Mammary epithelial cell (primary cell): ENCODE measurements at regions of chr12 and their contacts with region 1.

Region 1: GRCh38 chr12:28998637-28999120 is 150.4 kb upstream of the FAR2 start:
- DNase-seq: peak; percentile 56
- H3K4me3 ChIP-seq: no peak overlapping the region
- H3K27ac ChIP-seq: no peak overlapping the region
- H3K4me1 ChIP-seq: peaks cover 10% of the 10 kb centered on the region
- H3K27me3 ChIP-seq: no peaks in the 10 kb centered on the region
- CTCF ChIP-seq: peak; percentile 51 to 61

Region 2: DNA sequence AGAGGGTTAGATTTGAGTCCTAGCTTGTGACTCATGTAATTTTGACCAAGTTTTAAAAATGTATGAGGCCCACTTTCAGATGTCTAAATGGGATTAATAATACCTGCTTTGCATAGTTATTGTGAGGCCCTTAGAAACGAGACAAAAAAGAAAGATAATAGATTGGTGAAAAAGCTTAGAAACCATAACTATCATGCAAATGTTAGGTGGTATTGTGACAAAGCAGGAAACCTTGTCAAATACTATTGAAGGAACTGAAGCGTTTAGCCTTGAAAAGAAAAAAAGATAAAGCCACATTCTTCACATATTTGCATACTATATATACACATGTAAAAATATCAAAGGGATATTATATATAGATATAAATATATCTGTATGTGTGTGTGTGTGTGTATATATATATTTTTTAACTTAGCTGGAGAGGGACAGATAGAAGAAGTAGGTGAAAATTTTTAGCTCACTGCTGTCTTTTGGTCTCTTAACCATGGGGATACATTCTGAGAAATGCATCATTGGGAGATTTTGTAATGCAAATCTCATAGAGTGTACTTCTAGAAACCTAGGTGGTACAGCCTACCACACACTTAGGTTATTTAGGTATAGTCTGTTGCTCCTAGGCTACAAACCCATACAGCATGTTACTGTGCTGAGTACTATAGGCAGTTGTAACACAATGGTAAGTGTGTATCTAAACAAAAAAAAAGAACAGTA is 538.1 kb before region 1 on chr12:
- CTCF ChIA-PET with region 1: no interaction called
- dilution Hi-C with region 1: no loop called
- in situ Hi-C with region 1: no loop called
- intact Hi-C with region 1: loop called (anchors 10 kb)
- DNase-seq: no peak
- H3K4me3 ChIP-seq: no peak overlapping the region
- H3K27ac ChIP-seq: no peak overlapping the region
- H3K4me1 ChIP-seq: no peaks in the 10 kb centered on the region
- H3K27me3 ChIP-seq: no peaks in the 10 kb centered on the region
- CTCF ChIP-seq: no peak

Region 3: GRCh38 chr12:28583701-28584261 is 414.9 kb before region 1 on chr12:
- CTCF ChIA-PET with region 1: no interaction called
- dilution Hi-C with region 1: no loop called
- in situ Hi-C with region 1: no loop called
- intact Hi-C with region 1: loop called (anchors 10 kb)
- DNase-seq: peak; percentile 77
- H3K4me3 ChIP-seq: no peak overlapping the region
- H3K27ac ChIP-seq: no peak overlapping the region
- H3K4me1 ChIP-seq: no peaks in the 10 kb centered on the region
- H3K27me3 ChIP-seq: no peaks in the 10 kb centered on the region
- CTCF ChIP-seq: peak; percentile 40 to 54

Region 4: GRCh38 chr12:28814246-28814645 is 184.4 kb before region 1 on chr12:
- CTCF ChIA-PET with region 1: no interaction called
- dilution Hi-C with region 1: no loop called
- in situ Hi-C with region 1: no loop called
- intact Hi-C with region 1: no loop called
- DNase-seq: peak; percentile 94
- H3K4me3 ChIP-seq: no peak overlapping the region
- H3K27ac ChIP-seq: no peak overlapping the region
- H3K4me1 ChIP-seq: peaks cover 15% of the 10 kb centered on the region
- H3K27me3 ChIP-seq: no peaks in the 10 kb centered on the region
- CTCF ChIP-seq: no peak

Region 5: GRCh38 chr12:28941248-28941647 is 57.4 kb before region 1 on chr12:
- CTCF ChIA-PET with region 1: no interaction called
- dilution Hi-C with region 1: no loop called
- in situ Hi-C with region 1: no loop called
- intact Hi-C with region 1: no loop called
- DNase-seq: peak; percentile 67
- H3K4me3 ChIP-seq: no peak overlapping the region
- H3K27ac ChIP-seq: peak overlapping the region; percentile 81
- H3K4me1 ChIP-seq: peaks cover 42% of the 10 kb centered on the region
- H3K27me3 ChIP-seq: no peaks in the 10 kb centered on the region
- CTCF ChIP-seq: no peak